GM12878 (cell line): ENCODE measurements at regions of chr13 and their contacts with region 1.

Region 1: GRCh38 chr13:49996951-49997895 is at the start of gene TRIM13:
- DNase-seq: peak; percentile 48
- ATAC-seq: peak; percentile 84
- H3K4me3 ChIP-seq: peak within 1 kb of the TSS; percentile 92
- H3K27ac ChIP-seq: peak within 1 kb of the TSS; percentile 96
- H3K4me1 ChIP-seq: peaks cover 12% of the 10 kb centered on the region
- H3K27me3 ChIP-seq: no peaks in the 10 kb centered on the region
- CTCF ChIP-seq: peak; percentile 80 to 87 (median 81)
- EP300 ChIP-seq: 0 out of 4 replicates have a peak, but pooled peaks of 1 of the 2 experiments have one; percentile 26
- POLR2A ChIP-seq: peak; percentile 91
- RAD21 ChIP-seq: peak; percentile 68
- polyA plus RNA-seq, gene TRIM13: 25.7 to 33.8 TPM

Region 2: GRCh38 chr13:49976314-49977258 is 20.6 kb before region 1 on chr13:
- CTCF ChIA-PET with region 1: interaction called, 30 read pairs
- POLR2A ChIA-PET with region 1: interaction called, 4 read pairs
- RAD21 ChIA-PET with region 1: interaction called, 21 read pairs
- SMC1A ChIA-PET with region 1: interaction called, 10 read pairs
- in situ Hi-C with region 1: no loop called
- intact Hi-C with region 1: no loop called
- DNase-seq: peak; percentile 55
- ATAC-seq: peak; percentile 95
- H3K4me3 ChIP-seq: no peak overlapping the region
- H3K27ac ChIP-seq: no peak overlapping the region
- H3K4me1 ChIP-seq: no peaks in the 10 kb centered on the region
- H3K27me3 ChIP-seq: no peaks in the 10 kb centered on the region
- CTCF ChIP-seq: peak; percentile 86 to 95 (median 88)
- EP300 ChIP-seq: no peak
- POLR2A ChIP-seq: no peak
- RAD21 ChIP-seq: peak; percentile 99

Region 3: DNA sequence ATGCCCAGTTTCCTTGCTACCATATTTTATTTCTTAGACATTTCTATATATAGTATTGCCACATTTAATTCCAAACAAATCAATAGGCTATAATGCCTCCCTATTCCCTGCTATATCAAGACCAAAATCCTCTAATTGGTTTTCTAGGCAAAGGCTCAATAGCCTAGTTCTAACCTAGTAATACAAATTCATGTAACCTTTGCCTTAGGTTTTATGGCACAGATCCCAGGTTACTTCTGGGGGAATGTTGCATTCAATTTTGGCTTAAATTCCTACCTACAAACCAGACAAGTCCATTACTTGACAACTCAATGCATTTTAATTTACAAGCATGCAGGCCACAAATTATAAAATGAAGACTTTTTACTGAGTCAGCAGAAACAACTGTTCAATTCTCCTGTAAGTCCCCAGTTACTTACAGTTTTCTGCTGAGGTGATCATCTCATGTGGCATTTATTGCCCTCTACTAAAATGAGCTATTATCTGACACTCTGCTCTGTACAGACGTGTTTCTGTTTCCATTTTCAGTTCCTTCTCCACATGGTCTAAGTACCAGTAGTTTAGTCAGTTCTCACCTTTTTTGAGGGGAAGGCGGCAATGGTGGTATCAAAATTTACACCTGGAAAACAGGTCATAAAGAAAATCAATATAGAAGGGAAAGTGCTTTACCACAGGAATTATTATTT is 29.7 kb after region 1 on chr13:
- CTCF ChIA-PET with region 1: interaction called, 7 read pairs
- POLR2A ChIA-PET with region 1: interaction called, 4 read pairs
- RAD21 ChIA-PET with region 1: interaction called, 12 read pairs
- SMC1A ChIA-PET with region 1: interaction called, 9 read pairs
- in situ Hi-C with region 1: no loop called
- intact Hi-C with region 1: no loop called
- DNase-seq: peak; percentile 80
- ATAC-seq: peak; percentile 100
- H3K4me3 ChIP-seq: no peak overlapping the region
- H3K27ac ChIP-seq: no peak overlapping the region
- H3K4me1 ChIP-seq: peaks cover 17% of the 10 kb centered on the region
- H3K27me3 ChIP-seq: no peaks in the 10 kb centered on the region
- CTCF ChIP-seq: no peak
- EP300 ChIP-seq: peak; percentile 46 to 91; a peak in 3 of 4 replicates
- POLR2A ChIP-seq: no peak
- RAD21 ChIP-seq: no peak

Region 4: GRCh38 chr13:50075619-50076097 is 78.4 kb after region 1 on chr13:
- CTCF ChIA-PET with region 1: interaction called, 159 read pairs
- POLR2A ChIA-PET with region 1: interaction called, 80 read pairs
- RAD21 ChIA-PET with region 1: interaction called, 175 read pairs
- SMC1A ChIA-PET with region 1: interaction called, 38 read pairs
- in situ Hi-C with region 1: no loop called
- intact Hi-C with region 1: no loop called
- DNase-seq: no peak
- ATAC-seq: peak; percentile 67
- H3K4me3 ChIP-seq: peak overlapping the region; percentile 48
- H3K27ac ChIP-seq: peak overlapping the region; percentile 51
- H3K4me1 ChIP-seq: peaks cover 8% of the 10 kb centered on the region; the same call in 1 of the 2 replicates
- H3K27me3 ChIP-seq: no peaks in the 10 kb centered on the region
- CTCF ChIP-seq: no peak
- EP300 ChIP-seq: no peak
- POLR2A ChIP-seq: no peak
- RAD21 ChIP-seq: no peak

Region 5: DNA sequence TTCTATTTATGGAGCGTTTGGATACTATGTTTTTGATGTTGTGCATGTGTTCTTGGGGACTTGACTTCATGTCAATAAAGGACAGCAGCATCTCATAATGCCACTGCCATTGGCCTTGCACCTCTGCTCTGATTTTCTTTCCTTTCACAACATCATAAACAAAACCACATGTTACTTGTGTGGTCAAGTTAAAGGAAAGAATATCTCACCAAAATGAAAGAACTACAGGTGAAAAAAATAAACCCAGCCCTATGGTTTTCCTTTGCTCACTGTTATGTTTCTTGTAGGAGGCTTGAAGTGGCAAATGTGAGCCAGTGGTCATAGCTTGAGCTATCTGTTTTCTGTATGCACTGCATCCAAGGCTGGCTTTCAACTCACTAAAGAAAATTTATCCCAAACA is 258.4 kb after region 1 on chr13:
- CTCF ChIA-PET with region 1: no interaction called
- POLR2A ChIA-PET with region 1: no interaction called
- RAD21 ChIA-PET with region 1: no interaction called
- SMC1A ChIA-PET with region 1: no interaction called
- in situ Hi-C with region 1: no loop called
- intact Hi-C with region 1: no loop called
- DNase-seq: no peak
- ATAC-seq: no peak
- H3K4me3 ChIP-seq: no peak overlapping the region
- H3K27ac ChIP-seq: no peak overlapping the region
- H3K4me1 ChIP-seq: no peaks in the 10 kb centered on the region
- H3K27me3 ChIP-seq: peaks cover 0 to 4% of the 10 kb centered on the region in 2 experiments; a peak in 1 of 4 replicates
- CTCF ChIP-seq: no peak
- EP300 ChIP-seq: no peak
- POLR2A ChIP-seq: no peak
- RAD21 ChIP-seq: no peak

Region 6: DNA sequence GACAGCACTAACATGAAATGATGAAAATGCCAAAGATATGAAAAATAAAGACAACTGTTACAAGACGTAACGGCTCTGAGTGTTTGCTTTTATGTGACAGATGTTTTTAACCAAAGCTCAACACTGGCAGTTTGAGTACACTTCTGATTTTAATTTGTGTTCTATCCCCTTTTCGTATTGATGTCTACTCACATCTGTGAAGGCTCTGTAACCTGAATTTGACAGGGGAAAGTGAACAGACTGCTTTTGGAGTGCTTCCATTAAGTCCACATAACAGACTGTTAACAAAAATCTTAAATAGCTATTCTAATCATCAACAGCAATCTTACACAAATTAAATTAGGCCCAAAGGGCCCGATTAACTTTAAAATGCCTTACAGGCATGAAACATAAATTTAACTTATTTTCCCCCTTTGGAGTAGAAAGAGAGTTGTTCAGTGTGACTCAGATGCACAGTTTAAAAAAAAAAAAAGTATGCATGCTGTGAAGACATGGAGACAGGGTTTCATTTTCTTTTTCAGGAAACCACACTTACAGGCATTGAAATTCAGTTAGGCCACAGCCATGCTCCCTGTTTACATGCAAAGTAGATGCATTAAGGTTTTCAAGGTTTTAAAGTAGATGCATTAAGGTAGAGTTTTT is 896.1 kb after region 1 on chr13:
- CTCF ChIA-PET with region 1: interaction called, 3 read pairs
- POLR2A ChIA-PET with region 1: no interaction called
- RAD21 ChIA-PET with region 1: interaction called, 3 read pairs
- SMC1A ChIA-PET with region 1: no interaction called
- in situ Hi-C with region 1: no loop called
- intact Hi-C with region 1: loop called (anchors 5 kb)
- DNase-seq: no peak
- ATAC-seq: peak; percentile 88
- H3K4me3 ChIP-seq: peak overlapping the region; percentile 50; the same call in 1 of the 2 replicates
- H3K27ac ChIP-seq: peak overlapping the region; percentile 93
- H3K4me1 ChIP-seq: peaks cover 34% of the 10 kb centered on the region
- H3K27me3 ChIP-seq: no peaks in the 10 kb centered on the region
- CTCF ChIP-seq: no peak
- EP300 ChIP-seq: peak; percentile 62 to 78; a peak in 3 of 4 replicates
- POLR2A ChIP-seq: no peak
- RAD21 ChIP-seq: no peak